HEK293 (cell line): ENCODE measurements at regions of chr15 and their contacts with region 1.

Region 1: DNA sequence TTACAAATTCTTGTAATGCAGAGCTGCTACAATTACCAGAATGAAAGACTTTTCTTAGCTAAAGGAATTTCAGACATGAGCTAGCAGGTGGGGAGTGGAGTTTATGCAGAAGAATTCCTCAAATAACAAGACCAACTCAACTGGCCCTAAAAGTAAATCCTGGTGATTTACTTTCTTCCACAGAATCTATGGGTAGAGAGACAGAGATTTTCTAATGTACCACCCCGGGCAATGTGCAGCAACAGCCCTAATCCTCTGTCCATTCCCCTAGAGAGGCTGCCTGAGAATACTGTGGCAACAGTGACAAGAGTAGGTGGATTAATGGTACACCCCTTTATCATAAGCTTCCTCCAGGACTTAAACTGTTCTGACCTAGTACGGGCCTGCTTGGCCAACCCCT is 55.2 kb downstream of the AQR start:
- H3K4me3 ChIP-seq: no peak overlapping the region
- H3K27ac ChIP-seq: no peak overlapping the region
- H3K4me1 ChIP-seq: no peaks in the 10 kb centered on the region
- CTCF ChIP-seq: no peak

Region 2: DNA sequence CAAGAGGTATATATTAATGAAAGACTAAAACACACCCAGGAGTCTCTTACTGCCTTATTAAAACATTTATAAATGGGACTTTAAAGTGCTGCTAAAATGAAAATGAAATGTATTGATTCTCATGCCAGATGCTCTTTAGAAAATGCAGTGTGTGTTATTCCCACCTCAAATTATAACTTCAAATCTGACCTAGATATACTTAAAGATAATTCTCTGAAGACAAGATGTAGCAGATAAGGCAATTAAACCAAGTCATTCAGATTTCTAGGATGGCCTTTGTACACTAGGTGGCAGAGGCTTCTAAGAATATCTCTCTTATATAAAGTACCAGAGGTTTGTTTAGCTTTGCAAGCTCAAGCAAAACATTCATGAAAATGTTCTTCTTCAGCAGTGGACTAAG is 304.0 kb before region 1 on chr15:
- CTCF ChIA-PET with region 1: interaction called, 12 read pairs
- POLR2A ChIA-PET with region 1: no interaction called
- H3K4me3 ChIP-seq: no peak overlapping the region
- H3K27ac ChIP-seq: no peak overlapping the region
- H3K4me1 ChIP-seq: no peaks in the 10 kb centered on the region
- CTCF ChIP-seq: no peak

Region 3: DNA sequence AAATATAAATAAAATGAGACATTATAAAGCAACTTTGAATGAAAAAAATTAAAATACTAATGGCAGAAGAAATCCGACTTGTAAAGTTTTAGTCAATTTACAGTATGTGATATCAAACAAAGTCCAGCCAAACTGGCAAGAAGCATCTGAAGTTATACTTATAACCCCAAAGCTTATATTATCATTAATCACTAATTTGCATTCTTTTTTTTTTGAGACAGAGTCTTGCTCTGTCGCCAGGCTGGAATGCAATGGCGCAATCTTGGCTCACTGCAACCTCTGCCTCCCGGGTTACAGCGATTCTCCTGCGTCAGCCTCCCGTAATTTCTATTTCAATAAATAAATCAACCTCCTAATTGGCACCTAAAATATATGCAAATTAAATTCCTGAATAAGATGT is 24.8 kb before region 1 on chr15:
- CTCF ChIA-PET with region 1: no interaction called
- POLR2A ChIA-PET with region 1: no interaction called
- H3K4me3 ChIP-seq: no peak overlapping the region
- H3K27ac ChIP-seq: no peak overlapping the region
- H3K4me1 ChIP-seq: no peaks in the 10 kb centered on the region
- CTCF ChIP-seq: no peak